SK-N-SH (cell line): ENCODE measurements at regions of chr13 and their contacts with region 1.

Region 1: GRCh38 chr13:59771272-59771671 is 392.5 kb downstream of the DIAPH3 start:
- DNase-seq: peak; percentile 43
- H3K4me3 ChIP-seq: no peak overlapping the region
- H3K27ac ChIP-seq: peak overlapping the region in 1 of 2 experiments; percentile 32; a peak in 2 of 4 replicates
- H3K4me1 ChIP-seq: peaks cover 5 to 72% of the 10 kb centered on the region in 2 experiments
- H3K27me3 ChIP-seq: no peaks in the 10 kb centered on the region
- CTCF ChIP-seq: peak; percentile 89
- EP300 ChIP-seq: no peak
- RAD21 ChIP-seq: peak; percentile 86

Region 2: DNA sequence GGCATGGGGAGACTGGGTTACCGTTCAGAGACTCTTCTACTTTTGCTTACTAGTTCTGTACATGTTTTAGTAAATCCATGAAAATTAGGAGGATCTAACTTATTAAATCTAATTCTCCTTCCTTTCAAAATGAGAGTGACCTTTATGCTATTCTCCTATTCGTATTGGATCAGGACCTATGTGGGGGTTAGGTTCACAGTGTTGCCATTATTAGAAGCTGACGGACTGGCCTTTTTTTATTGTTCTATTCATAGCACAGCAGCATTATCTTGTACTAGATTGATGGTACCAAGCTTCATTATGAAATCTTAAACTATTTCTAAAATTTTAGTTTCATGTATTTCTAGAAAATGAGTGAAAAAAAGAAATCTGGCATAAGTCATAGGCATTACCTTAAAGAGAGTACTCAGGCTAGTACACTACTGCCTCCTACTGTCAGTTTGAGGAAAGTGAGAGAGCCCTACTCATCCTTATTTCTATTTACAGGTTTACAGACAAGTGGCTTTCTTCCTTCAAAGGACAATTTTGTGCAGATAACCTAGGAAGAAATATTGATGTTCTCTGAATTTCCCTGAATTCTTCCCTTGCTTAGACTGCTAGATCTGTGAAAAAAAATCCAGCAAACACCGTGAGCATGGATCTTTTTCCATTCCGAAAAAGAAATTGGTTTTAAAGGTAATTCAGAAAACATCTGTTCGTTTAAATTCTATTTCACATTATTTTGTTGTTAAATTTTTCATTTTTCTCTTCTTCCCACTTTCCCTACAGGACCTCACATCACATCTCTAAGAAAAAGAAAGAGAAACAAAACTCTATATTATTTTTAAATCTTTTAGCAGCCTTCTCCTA is 93.1 kb before region 1 on chr13:
- CTCF ChIA-PET with region 1: interaction called, 60 read pairs
- POLR2A ChIA-PET with region 1: no interaction called
- DNase-seq: peak; percentile 55
- H3K4me3 ChIP-seq: no peak overlapping the region; a peak in 1 of 4 replicates
- H3K27ac ChIP-seq: peak overlapping the region in 1 of 2 experiments; percentile 81; a peak in 2 of 4 replicates
- H3K4me1 ChIP-seq: peaks cover 7 to 31% of the 10 kb centered on the region in 2 experiments; a peak in 3 of 4 replicates
- H3K27me3 ChIP-seq: no peaks in the 10 kb centered on the region
- CTCF ChIP-seq: peak; percentile 94
- EP300 ChIP-seq: no peak
- RAD21 ChIP-seq: peak; percentile 95

Region 3: GRCh38 chr13:59690857-59691500 is 80.3 kb before region 1 on chr13:
- CTCF ChIA-PET with region 1: interaction called, 47 read pairs
- POLR2A ChIA-PET with region 1: no interaction called
- DNase-seq: no peak
- H3K4me3 ChIP-seq: no peak overlapping the region
- H3K27ac ChIP-seq: no peak overlapping the region
- H3K4me1 ChIP-seq: peaks cover 11 to 18% of the 10 kb centered on the region in 2 experiments; a peak in 3 of 4 replicates
- H3K27me3 ChIP-seq: no peaks in the 10 kb centered on the region
- CTCF ChIP-seq: no peak
- EP300 ChIP-seq: no peak
- RAD21 ChIP-seq: no peak

Region 4: GRCh38 chr13:59696271-59696670 is 75.0 kb before region 1 on chr13:
- CTCF ChIA-PET with region 1: interaction called, 47 read pairs
- POLR2A ChIA-PET with region 1: no interaction called
- DNase-seq: no peak
- H3K4me3 ChIP-seq: no peak overlapping the region
- H3K27ac ChIP-seq: no peak overlapping the region
- H3K4me1 ChIP-seq: peaks cover 4 to 9% of the 10 kb centered on the region in 2 experiments; a peak in 2 of 4 replicates
- H3K27me3 ChIP-seq: no peaks in the 10 kb centered on the region
- CTCF ChIP-seq: no peak
- EP300 ChIP-seq: no peak
- RAD21 ChIP-seq: no peak

Region 5: GRCh38 chr13:59782696-59783095 is 11.4 kb after region 1 on chr13:
- CTCF ChIA-PET with region 1: interaction called, 23 read pairs
- POLR2A ChIA-PET with region 1: no interaction called
- DNase-seq: no peak
- H3K4me3 ChIP-seq: no peak overlapping the region
- H3K27ac ChIP-seq: no peak overlapping the region
- H3K4me1 ChIP-seq: peaks cover 0 to 7% of the 10 kb centered on the region in 2 experiments; a peak in 1 of 4 replicates
- H3K27me3 ChIP-seq: no peaks in the 10 kb centered on the region
- CTCF ChIP-seq: no peak
- EP300 ChIP-seq: no peak
- RAD21 ChIP-seq: no peak

Region 6: GRCh38 chr13:59906413-59907049 is 135.3 kb after region 1 on chr13:
- CTCF ChIA-PET with region 1: interaction called, 12 read pairs
- POLR2A ChIA-PET with region 1: no interaction called
- DNase-seq: peak; percentile 27
- H3K4me3 ChIP-seq: no peak overlapping the region
- H3K27ac ChIP-seq: peak overlapping the region in 1 of 2 experiments; percentile 23; a peak in 1 of 4 replicates
- H3K4me1 ChIP-seq: peaks cover 0 to 15% of the 10 kb centered on the region in 2 experiments; a peak in 2 of 4 replicates
- H3K27me3 ChIP-seq: no peaks in the 10 kb centered on the region
- CTCF ChIP-seq: peak; percentile 82
- EP300 ChIP-seq: no peak
- RAD21 ChIP-seq: peak; percentile 91